Dorsolateral prefrontal cortex (tissue), 120 donors: ENCODE measurements at regions of chr11 and their contacts with region 1.

Region 1: GRCh38 chr11:117178210-117179034 is at the start of gene SIDT2:
- DNase-seq: peak; percentile 91 to 97 (median 96)
- H3K4me3 ChIP-seq: peak within 1 kb of the TSS; percentile 69 to 100 (median 96)
- H3K27ac ChIP-seq: peak within 1 kb of the TSS; percentile 70 to 98 (median 92)
- H3K27me3 ChIP-seq: no peaks in the 10 kb centered on the region
- CTCF ChIP-seq: peak in 32 of 56 donors; percentile 3 to 57 (median 31)
- total RNA-seq, gene SIDT2: 44.3 to 113 (median 69.8) TPM

Region 2: DNA sequence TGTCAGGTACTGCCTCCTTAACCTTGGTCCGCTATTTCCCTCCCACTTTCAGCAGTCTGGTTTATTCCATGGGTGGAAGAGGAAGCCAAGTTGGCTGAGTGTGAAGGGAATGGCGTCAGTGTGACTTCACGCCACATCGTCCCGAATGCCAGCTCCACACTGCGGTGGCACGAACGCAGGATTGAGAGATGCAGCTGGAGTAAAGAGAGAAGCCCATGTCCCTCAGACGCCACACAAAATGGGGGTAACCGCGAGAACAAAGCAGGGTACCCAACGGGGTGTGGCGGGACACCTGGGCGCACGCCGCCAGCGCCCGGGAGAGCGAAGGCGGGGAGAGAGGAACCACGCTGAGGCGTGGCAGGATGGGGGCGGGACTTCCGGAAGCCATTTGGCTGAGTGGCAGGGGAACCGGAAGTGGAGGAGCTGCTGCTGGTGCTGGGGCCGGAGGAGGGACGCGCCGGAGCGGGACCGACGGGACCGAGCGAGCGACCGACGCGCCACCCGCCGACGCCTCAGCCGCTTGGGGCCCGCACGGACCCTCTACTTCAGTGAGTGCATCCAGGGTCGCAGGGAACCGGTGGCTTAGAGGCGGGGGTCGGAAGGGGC is 34.4 kb before region 1 on chr11 and contains the start of gene PAFAH1B2:
- intact Hi-C with region 1: loop called (anchors 2 to 5 kb)
- DNase-seq: peak; percentile 90 to 97 (median 95)
- H3K4me3 ChIP-seq: peak within 1 kb of the TSS; percentile 68 to 99 (median 92)
- H3K27ac ChIP-seq: peak within 1 kb of the TSS; percentile 65 to 99 (median 95)
- H3K27me3 ChIP-seq: no peaks in the 10 kb centered on the region
- CTCF ChIP-seq: peak in 31 of 56 donors; percentile 6 to 59 (median 28)
- total RNA-seq, gene PAFAH1B2: 78.7 to 162 (median 121) TPM

Region 3: GRCh38 chr11:117217141-117218084 is 39.0 kb after region 1 on chr11:
- intact Hi-C with region 1: loop called in 1 of 2 experiments (anchors 5 kb)
- DNase-seq: peak in 1 of 10 donors; percentile 18
- H3K4me3 ChIP-seq: peak overlapping the region in 1 of 59 donors; percentile 0
- H3K27ac ChIP-seq: peak overlapping the region in 43 of 59 donors; percentile 11 to 90 (median 52)
- H3K27me3 ChIP-seq: no peaks in the 10 kb centered on the region
- CTCF ChIP-seq: no peak